ENCODE measurements at regions of chr18 and their contacts with region 1.

Region 1: DNA sequence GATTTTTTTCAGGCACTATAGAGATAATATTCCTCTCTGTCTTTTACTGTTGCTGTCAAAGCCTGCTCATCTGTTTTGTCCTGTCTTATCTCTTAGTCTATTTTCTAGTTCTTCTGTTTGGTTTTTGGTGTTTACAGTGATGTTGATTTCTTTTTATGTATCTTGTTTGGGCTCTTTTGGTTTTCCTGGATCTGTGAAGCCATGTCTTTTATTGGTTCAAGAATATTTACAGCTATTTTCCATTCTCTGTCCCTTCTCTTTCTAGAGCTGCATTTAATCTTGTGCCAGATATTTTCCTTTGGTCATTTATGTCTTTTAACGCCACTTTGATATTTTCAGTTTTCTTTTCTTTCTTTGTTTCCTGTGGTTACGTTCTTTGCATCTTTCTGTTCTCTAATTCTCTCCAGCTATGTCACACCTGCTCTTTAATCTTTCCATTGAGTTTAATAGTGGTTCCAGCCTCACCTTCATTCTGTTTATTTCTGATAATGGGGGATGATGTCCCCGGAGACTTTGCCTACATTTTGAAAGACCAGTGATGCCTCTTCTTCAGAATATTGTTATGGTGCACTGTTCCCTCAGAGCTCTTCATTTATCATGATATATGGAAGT is 32.0 kb downstream of the SMCHD1 start:
- DNase-seq: no peak

Region 2: GRCh38 chr18:2729757-2730156 is 42.3 kb after region 1 on chr18:
- in situ Hi-C with region 1: loop called (anchors 10 kb)
- DNase-seq: no peak